T-cell (primary cell): ENCODE measurements at regions of chr7 and their contacts with region 1.

Region 1: DNA sequence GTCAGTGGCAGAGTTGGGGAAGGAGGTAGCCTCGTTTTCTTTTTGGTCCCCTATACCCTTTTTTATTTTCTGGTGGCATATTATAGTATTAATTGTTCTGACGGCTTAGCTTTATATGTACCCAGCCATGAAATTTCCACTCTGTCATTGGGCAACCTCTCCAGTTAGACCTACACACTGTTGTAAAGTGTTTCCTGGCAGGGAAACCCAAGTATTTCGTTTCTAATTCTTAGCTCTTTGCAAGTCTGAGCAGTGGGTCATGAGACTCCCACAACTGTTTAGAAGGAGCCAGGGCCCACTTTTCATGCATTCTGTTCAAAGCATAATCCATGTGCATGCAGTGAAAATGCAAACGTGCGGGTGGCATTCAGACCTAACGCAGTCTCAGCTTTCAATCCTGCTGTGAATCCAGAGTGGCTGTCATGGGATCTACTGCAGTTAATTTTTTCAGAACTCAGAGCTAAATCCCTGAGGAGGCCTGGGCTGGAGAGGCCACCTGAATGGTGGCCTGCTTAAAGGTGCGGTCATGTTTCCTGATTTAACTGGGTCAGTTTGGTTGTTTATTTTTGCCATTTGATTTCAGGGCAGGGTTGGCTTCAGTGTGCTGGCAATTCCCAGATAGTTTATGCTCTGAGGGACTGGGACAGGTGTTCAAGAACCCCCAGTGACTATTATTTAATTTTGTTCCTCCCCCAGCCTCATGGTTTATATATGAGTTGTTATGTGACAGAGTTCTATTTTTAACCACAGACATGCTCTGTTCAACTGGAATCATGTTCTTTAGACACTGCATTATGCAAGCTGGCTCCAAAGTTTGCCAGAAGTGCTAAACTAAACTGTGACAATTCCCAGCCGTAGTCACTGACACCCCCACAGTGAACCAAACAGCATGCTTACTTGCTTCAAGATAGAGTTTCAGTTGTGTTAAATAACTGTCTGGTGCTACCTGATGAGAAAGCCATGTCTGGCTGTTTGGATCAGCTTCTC is 27.4 kb upstream of the SYPL1 start:
- DNase-seq: no peak
- ATAC-seq: no peak
- H3K4me3 ChIP-seq: no peak overlapping the region
- H3K4me3 Mint-ChIP-seq: no peak overlapping the region
- H3K27ac ChIP-seq: no peak overlapping the region
- H3K27ac Mint-ChIP-seq: no peak overlapping the region
- H3K4me1 ChIP-seq: no peaks in the 10 kb centered on the region
- H3K4me1 Mint-ChIP-seq: no peaks in the 10 kb centered on the region
- H3K27me3 ChIP-seq: no peaks in the 10 kb centered on the region
- H3K27me3 Mint-ChIP-seq: peaks cover 0 to 2% of the 10 kb centered on the region in 2 donors

Region 2: DNA sequence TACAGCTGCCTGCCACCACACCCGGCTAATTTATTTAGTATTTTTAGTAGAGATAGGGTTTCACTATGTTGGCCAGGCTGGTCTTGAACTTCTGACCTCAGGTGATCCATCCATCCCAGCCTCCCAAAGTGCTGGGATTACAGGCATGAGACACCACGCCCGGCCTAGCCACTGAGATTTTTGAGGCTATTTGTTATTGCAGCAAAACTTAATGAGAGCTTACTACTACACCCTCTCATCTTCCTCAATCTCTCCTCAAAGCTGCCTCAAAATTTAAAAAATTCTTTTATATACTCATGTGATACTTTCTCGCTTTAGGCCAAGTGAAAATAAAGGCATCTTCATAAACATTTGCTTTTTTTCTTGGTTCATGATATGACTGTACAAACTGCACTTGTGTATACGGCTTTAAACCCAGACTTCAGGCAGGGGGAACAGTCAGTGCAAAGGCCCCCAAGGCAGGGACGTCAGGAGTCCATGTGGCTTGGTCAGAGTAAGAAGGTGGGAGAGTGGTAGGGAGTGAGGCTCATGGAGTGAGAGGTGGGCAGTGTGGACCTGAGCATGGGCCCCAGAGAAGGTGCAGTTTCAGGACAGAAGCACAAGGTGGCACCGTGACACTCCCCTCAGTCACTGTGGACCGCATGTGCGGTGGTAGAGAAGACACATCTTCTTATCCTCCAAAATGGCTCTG is 82.9 kb before region 1 on chr7:
- CTCF ChIA-PET with region 1: interaction called in 1 of 2 experiments, 10 read pairs
- POLR2A ChIA-PET with region 1: no interaction called
- DNase-seq: peak; percentile 29 to 85 (median 63)
- ATAC-seq: peak; percentile 89 to 98 (median 94)
- H3K4me3 ChIP-seq: no peak overlapping the region
- H3K4me3 Mint-ChIP-seq: no peak overlapping the region
- H3K27ac ChIP-seq: no peak overlapping the region
- H3K27ac Mint-ChIP-seq: no peak overlapping the region
- H3K4me1 ChIP-seq: peaks cover 0 to 19% of the 10 kb centered on the region in 2 experiments
- H3K4me1 Mint-ChIP-seq: peaks cover 16 to 30% (median 19%) of the 10 kb centered on the region in 3 donors
- H3K27me3 ChIP-seq: peaks cover 0 to 4% of the 10 kb centered on the region in 2 experiments
- H3K27me3 Mint-ChIP-seq: no peaks in the 10 kb centered on the region